ENCODE measurements at regions of chr18 and their contacts with region 1.

Region 1: GRCh38 chr18:35407871-35408481 is 30.8 kb upstream of the ZNF396 start:
- DNase-seq: peak; percentile 79
- ATAC-seq: peak; percentile 45
- H3K4me3 ChIP-seq: no peak overlapping the region
- H3K4me3 Mint-ChIP-seq: no peak overlapping the region
- H3K27ac ChIP-seq: no peak overlapping the region
- H3K27ac Mint-ChIP-seq: no peak overlapping the region
- H3K4me1 ChIP-seq: peaks cover 39 to 48% of the 10 kb centered on the region in 2 donors
- H3K4me1 Mint-ChIP-seq: peaks cover 42% of the 10 kb centered on the region
- H3K27me3 ChIP-seq: no peaks in the 10 kb centered on the region
- H3K27me3 Mint-ChIP-seq: no peaks in the 10 kb centered on the region
- CTCF ChIP-seq: peak; percentile 94

Region 2: GRCh38 chr18:35231052-35231451 is 176.9 kb before region 1 on chr18:
- CTCF ChIA-PET with region 1: interaction called, 7 read pairs
- POLR2A ChIA-PET with region 1: no interaction called
- intact Hi-C with region 1: loop called (anchors 1 kb)
- DNase-seq: peak; percentile 86
- ATAC-seq: peak; percentile 88
- H3K4me3 ChIP-seq: peak overlapping the region in 1 of 5 experiments; percentile 31
- H3K4me3 Mint-ChIP-seq: peak overlapping the region; percentile 59
- H3K27ac ChIP-seq: no peak overlapping the region
- H3K27ac Mint-ChIP-seq: peak overlapping the region; percentile 10
- H3K4me1 ChIP-seq: no peaks in the 10 kb centered on the region
- H3K4me1 Mint-ChIP-seq: peaks cover 3% of the 10 kb centered on the region
- H3K27me3 ChIP-seq: no peaks in the 10 kb centered on the region
- H3K27me3 Mint-ChIP-seq: no peaks in the 10 kb centered on the region
- CTCF ChIP-seq: peak; percentile 99

Region 3: DNA sequence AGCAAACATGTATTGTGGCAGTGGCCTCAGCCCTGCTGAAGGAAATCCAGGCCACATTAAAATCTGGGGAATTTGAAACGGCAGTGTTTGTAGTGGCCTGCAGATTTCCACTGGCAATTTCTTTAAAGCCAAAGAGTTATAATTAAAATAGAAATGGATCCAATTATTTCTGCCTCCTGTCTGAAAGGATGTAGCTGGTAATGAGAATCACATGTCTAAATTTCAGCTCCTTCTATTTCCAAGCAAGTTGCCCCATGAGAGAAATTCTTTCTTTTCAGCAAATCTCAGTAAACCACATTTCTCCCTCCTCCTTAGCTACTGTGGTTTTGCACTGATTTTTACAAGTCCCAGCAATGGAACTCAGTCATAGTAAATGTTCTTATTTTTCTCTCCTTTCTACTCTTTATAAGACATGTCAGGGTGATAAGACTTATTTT is 24.6 kb after region 1 on chr18:
- CTCF ChIA-PET with region 1: interaction called, 3 read pairs
- POLR2A ChIA-PET with region 1: no interaction called
- intact Hi-C with region 1: loop called (anchors 2 kb)
- DNase-seq: no peak
- ATAC-seq: no peak
- H3K4me3 ChIP-seq: no peak overlapping the region
- H3K4me3 Mint-ChIP-seq: no peak overlapping the region
- H3K27ac ChIP-seq: no peak overlapping the region
- H3K27ac Mint-ChIP-seq: no peak overlapping the region
- H3K4me1 ChIP-seq: no peaks in the 10 kb centered on the region
- H3K4me1 Mint-ChIP-seq: no peaks in the 10 kb centered on the region
- H3K27me3 ChIP-seq: no peaks in the 10 kb centered on the region
- H3K27me3 Mint-ChIP-seq: no peaks in the 10 kb centered on the region
- CTCF ChIP-seq: no peak

Region 4: DNA sequence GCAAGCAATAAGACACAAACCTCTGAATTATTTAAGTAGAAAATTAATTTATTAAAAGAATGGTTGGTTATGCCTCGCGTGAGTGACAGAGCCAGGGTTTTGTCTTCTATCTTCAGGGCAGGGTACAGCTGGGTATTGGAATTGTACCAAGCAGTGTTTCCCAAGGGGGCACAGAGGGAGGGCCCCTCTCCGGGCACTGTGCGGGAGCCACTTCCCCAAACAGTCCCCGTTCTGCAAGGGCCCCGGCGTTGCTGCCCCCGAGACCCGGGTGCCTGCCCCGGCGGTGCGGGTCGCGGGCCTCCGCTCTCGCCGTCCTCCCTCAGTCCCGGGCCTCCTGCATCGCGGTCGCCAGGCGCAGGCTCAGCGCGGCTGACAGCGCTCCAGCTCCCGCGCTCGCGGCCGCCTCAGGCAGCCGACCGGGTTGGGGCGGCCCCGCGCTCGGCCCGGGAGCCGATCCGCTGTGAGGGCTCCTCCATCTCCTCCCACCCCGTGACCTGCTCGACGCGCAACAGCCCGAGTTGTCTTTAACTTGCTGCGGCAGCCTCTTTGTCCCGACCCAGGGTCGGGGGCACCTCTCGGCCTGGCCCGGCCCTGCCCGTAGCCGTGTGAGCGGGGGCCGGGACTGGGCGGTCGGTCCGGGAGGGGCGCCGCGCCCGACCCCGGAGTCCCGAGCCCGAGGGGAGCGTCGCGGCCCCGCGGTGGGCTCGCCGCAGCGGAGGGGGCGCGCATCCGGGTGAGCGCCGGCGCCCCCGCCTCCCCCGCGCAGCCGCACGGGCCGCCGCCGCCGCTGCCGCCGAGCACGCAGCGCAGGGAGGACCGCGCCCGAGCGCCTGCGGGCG is 172.9 kb after region 1 on chr18:
- CTCF ChIA-PET with region 1: interaction called, 3 read pairs
- POLR2A ChIA-PET with region 1: no interaction called
- intact Hi-C with region 1: loop called (anchors 2 kb)
- DNase-seq: peak; percentile 88
- ATAC-seq: peak; percentile 65
- H3K4me3 ChIP-seq: peak overlapping the region; percentile 30 to 78 (median 65)
- H3K4me3 Mint-ChIP-seq: peak overlapping the region; percentile 84
- H3K27ac ChIP-seq: peak overlapping the region; percentile 69 to 86
- H3K27ac Mint-ChIP-seq: peak overlapping the region; percentile 88
- H3K4me1 ChIP-seq: peaks cover 15 to 16% of the 10 kb centered on the region in 2 donors
- H3K4me1 Mint-ChIP-seq: peaks cover 33% of the 10 kb centered on the region
- H3K27me3 ChIP-seq: no peaks in the 10 kb centered on the region
- H3K27me3 Mint-ChIP-seq: no peaks in the 10 kb centered on the region
- CTCF ChIP-seq: no peak

Region 5: DNA sequence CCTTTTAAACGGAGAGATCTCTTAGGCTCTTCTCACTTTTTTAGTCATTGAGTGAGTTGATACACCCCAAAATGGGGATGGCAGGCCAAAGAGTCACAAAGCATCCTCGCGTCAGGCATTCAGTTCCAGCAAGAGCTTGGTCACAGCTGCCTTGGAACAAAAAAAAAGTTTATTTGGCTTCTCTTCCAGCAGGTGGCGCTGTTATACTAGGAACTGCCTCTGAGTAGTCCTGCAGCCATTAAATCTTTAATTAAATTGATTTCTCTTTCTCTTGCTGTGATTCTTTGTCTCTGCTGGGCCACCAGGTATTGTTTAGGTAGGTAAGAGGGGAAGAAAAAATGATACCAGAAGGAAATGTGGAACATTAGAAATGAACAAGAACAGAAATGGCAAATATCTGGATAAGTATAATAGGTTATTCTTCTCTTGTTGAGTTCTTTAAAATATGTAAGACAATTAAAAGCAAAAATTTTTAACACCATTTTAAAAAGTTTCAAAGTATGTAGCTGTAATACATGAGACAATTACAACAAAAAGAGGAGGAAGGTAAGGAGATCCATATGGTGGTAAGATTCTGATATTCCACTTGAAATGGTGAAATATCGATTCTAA is 348.6 kb after region 1 on chr18:
- CTCF ChIA-PET with region 1: interaction called, 12 read pairs
- POLR2A ChIA-PET with region 1: no interaction called
- intact Hi-C with region 1: no loop called
- DNase-seq: peak; percentile 75
- ATAC-seq: peak; percentile 63
- H3K4me3 ChIP-seq: no peak overlapping the region
- H3K4me3 Mint-ChIP-seq: no peak overlapping the region
- H3K27ac ChIP-seq: no peak overlapping the region
- H3K27ac Mint-ChIP-seq: no peak overlapping the region
- H3K4me1 ChIP-seq: no peaks in the 10 kb centered on the region
- H3K4me1 Mint-ChIP-seq: peaks cover 2% of the 10 kb centered on the region
- H3K27me3 ChIP-seq: peaks cover 0 to 11% (median 6%) of the 10 kb centered on the region in 4 experiments
- H3K27me3 Mint-ChIP-seq: peaks cover 27% of the 10 kb centered on the region
- CTCF ChIP-seq: peak; percentile 99